HepG2 (cell line): ENCODE measurements at regions of chr6 and their contacts with region 1.

Region 1: GRCh38 chr6:152552616-152553209 is 84.4 kb downstream of the SYNE1 start:
- DNase-seq: peak; percentile 73
- ATAC-seq: peak; percentile 100
- H3K4me3 ChIP-seq: no peak overlapping the region
- H3K27ac ChIP-seq: no peak overlapping the region
- H3K4me1 ChIP-seq: no peaks in the 10 kb centered on the region
- H3K27me3 ChIP-seq: no peaks in the 10 kb centered on the region; a peak in 1 of 5 replicates
- CTCF ChIP-seq: peak; percentile 90
- EP300 ChIP-seq: no peak
- POLR2A ChIP-seq: no peak
- RAD21 ChIP-seq: peak; percentile 82

Region 2: DNA sequence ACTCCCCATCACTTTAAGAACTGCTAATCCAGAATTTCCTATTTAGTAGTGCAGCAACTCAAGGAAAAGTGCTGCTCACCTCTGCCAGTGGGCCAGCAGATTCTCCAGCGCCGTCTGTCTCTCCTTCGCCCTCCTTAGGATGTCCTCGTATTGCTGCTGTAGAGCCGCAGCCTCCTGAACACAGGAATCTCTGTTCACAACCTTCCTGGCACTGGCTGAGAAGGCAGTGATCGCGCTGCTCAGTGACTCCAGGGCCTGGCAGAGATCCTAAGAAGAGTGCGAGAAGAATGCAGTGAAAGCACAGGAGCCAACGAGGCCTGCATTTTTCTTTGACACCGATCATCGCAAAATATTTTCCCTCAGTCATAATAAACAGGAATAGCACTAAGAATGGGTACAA is 124.6 kb before region 1 on chr6:
- CTCF ChIA-PET with region 1: no interaction called
- POLR2A ChIA-PET with region 1: no interaction called
- in situ Hi-C with region 1: no loop called
- intact Hi-C with region 1: no loop called
- DNase-seq: no peak
- ATAC-seq: no peak
- H3K4me3 ChIP-seq: no peak overlapping the region
- H3K27ac ChIP-seq: no peak overlapping the region
- H3K4me1 ChIP-seq: no peaks in the 10 kb centered on the region
- H3K27me3 ChIP-seq: peaks cover 0 to 7% of the 10 kb centered on the region in 2 experiments; a peak in 1 of 5 replicates
- CTCF ChIP-seq: no peak
- EP300 ChIP-seq: no peak
- POLR2A ChIP-seq: no peak
- RAD21 ChIP-seq: no peak

Region 3: GRCh38 chr6:152642989-152643388 is 90.3 kb after region 1 on chr6:
- CTCF ChIA-PET with region 1: interaction called, 17 read pairs
- POLR2A ChIA-PET with region 1: no interaction called
- in situ Hi-C with region 1: loop called (anchors 5 kb)
- intact Hi-C with region 1: loop called (anchors 1 kb)
- DNase-seq: peak; percentile 53
- ATAC-seq: peak; percentile 100
- H3K4me3 ChIP-seq: no peak overlapping the region
- H3K27ac ChIP-seq: no peak overlapping the region
- H3K4me1 ChIP-seq: no peaks in the 10 kb centered on the region
- H3K27me3 ChIP-seq: peaks cover 0 to 9% of the 10 kb centered on the region in 2 experiments; a peak in 2 of 5 replicates
- CTCF ChIP-seq: peak; percentile 86
- EP300 ChIP-seq: no peak
- POLR2A ChIP-seq: no peak
- RAD21 ChIP-seq: peak; percentile 74

Region 4: GRCh38 chr6:152669895-152670294 is 117.2 kb after region 1 on chr6:
- CTCF ChIA-PET with region 1: interaction called, 13 read pairs
- POLR2A ChIA-PET with region 1: no interaction called
- in situ Hi-C with region 1: no loop called
- intact Hi-C with region 1: loop called (anchors 1 kb)
- DNase-seq: peak; percentile 5
- ATAC-seq: peak; percentile 69
- H3K4me3 ChIP-seq: no peak overlapping the region
- H3K27ac ChIP-seq: no peak overlapping the region
- H3K4me1 ChIP-seq: no peaks in the 10 kb centered on the region
- H3K27me3 ChIP-seq: no peaks in the 10 kb centered on the region
- CTCF ChIP-seq: peak; percentile 34
- EP300 ChIP-seq: no peak
- POLR2A ChIP-seq: no peak
- RAD21 ChIP-seq: no peak

Region 5: GRCh38 chr6:152794696-152795095 is 242.0 kb after region 1 on chr6:
- CTCF ChIA-PET with region 1: no interaction called
- POLR2A ChIA-PET with region 1: no interaction called
- in situ Hi-C with region 1: no loop called
- intact Hi-C with region 1: no loop called
- DNase-seq: no peak
- ATAC-seq: no peak
- H3K4me3 ChIP-seq: no peak overlapping the region
- H3K27ac ChIP-seq: no peak overlapping the region
- H3K4me1 ChIP-seq: no peaks in the 10 kb centered on the region
- H3K27me3 ChIP-seq: no peaks in the 10 kb centered on the region
- CTCF ChIP-seq: no peak
- EP300 ChIP-seq: no peak
- POLR2A ChIP-seq: no peak
- RAD21 ChIP-seq: no peak

Region 6: GRCh38 chr6:152863618-152864326 is 311.1 kb after region 1 on chr6:
- CTCF ChIA-PET with region 1: no interaction called
- POLR2A ChIA-PET with region 1: no interaction called
- in situ Hi-C with region 1: no loop called
- intact Hi-C with region 1: loop called (anchors 1 kb)
- DNase-seq: peak; percentile 74
- ATAC-seq: peak; percentile 98
- H3K4me3 ChIP-seq: no peak overlapping the region
- H3K27ac ChIP-seq: no peak overlapping the region
- H3K4me1 ChIP-seq: no peaks in the 10 kb centered on the region
- H3K27me3 ChIP-seq: no peaks in the 10 kb centered on the region
- CTCF ChIP-seq: peak; percentile 88
- EP300 ChIP-seq: no peak
- POLR2A ChIP-seq: no peak
- RAD21 ChIP-seq: peak; percentile 65